ENCODE measurements at regions of chrX and their contacts with region 1.

Region 1: DNA sequence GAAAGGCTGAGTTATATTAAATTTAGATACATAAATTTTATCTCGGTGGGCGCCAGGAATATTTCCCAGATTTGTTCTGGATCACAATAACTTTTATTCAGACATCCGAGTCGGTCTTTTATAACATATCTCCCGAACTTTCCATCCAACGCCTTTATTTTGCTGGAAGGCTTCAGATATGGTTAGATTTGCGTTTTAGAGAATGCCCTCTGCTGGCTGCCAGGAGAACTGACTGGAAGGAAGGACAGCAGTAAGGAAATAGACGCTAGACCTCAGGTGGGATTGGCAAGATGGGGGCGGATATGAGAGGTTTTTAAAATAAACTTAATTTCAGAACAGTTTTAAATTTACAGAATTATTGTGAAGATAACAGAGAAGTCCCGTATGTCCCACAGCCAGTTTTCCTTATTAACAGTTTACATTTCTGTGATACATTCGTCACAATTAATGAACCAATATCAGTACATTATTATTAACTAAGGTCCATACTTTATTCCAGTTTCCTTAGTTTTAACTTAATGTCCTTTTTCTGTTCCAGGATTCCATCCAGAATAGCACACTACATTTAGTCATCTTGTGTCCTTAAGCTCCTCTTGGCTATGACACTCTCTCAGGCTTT is 4.6 kb upstream of the KANTR start:
- DNase-seq: peak; percentile 85
- H3K4me3 ChIP-seq: peak overlapping the region in 3 of 4 donors; percentile 39 to 86 (median 43)
- H3K27ac ChIP-seq: peak overlapping the region; percentile 92 to 97 (median 96)
- H3K4me1 ChIP-seq: peaks cover 0 to 40% (median 34%) of the 10 kb centered on the region in 4 donors
- H3K27me3 ChIP-seq: no peaks in the 10 kb centered on the region
- CTCF ChIP-seq: peak; percentile 61 to 66 (median 63)
- EP300 ChIP-seq: no peak
- POLR2A ChIP-seq: no peak

Region 2: DNA sequence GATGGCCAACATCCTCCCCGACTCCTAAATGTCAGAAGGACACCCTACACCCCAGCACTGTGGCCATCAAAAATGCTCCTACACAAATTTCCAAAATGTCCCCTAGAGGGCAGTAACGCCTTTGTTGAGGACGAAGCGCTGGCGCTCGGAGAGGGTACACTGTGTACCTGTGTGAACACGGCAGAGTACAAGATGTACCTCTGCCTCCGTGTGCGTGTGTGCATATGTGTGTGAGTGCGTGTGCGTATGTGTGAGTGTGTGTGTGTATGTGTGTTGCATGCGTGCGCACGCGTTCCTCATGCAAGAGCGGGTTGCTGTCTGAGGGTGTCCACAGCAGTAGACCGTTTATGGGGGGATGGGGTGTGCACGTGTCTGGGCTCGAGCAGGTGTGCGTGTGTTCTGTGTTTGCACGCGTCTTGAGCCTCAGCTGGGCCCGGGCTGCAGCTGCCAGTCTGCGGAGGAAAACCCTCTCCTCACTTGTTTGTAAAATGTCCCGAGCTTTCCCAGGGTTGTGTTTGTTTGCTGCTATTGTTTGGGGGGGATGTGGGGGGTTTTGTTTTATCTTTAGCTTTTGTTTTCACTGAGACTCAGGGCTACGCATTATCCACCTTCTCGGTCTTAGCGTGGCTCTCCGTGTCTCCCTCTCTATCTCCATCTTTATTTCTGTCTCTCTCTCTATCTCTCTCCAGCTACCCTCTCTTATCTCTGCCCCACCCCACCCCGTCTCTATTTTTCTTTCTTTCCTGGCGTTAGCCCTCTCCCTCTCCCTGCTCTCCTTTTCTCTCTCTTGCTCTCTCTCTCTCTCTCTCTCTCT is 17.5 kb before region 1 on chrX:
- intact Hi-C with region 1: loop called (anchors 1 kb)
- DNase-seq: peak; percentile 94
- H3K4me3 ChIP-seq: peak overlapping the region in 3 of 4 donors; percentile 35 to 39 (median 36)
- H3K27ac ChIP-seq: peak overlapping the region; percentile 79 to 85 (median 81)
- H3K4me1 ChIP-seq: peaks cover 0 to 8% (median 3%) of the 10 kb centered on the region in 4 donors
- H3K27me3 ChIP-seq: no peaks in the 10 kb centered on the region
- CTCF ChIP-seq: peak; percentile 51 to 67 (median 60)
- EP300 ChIP-seq: peak; percentile 98 to 100 (median 98)
- POLR2A ChIP-seq: no peak